CD4-positive, alpha-beta memory T cell (primary cell): ENCODE measurements at regions of chr13 and their contacts with region 1.

Region 1: GRCh38 chr13:33723772-33724435 is 94.0 kb upstream of the RFC3 start:
- DNase-seq: peak; percentile 63 to 74 (median 72)
- H3K4me3 ChIP-seq: no peak overlapping the region
- H3K4me3 Mint-ChIP-seq: peak overlapping the region in 6 of 8 donors; percentile 17 to 70 (median 54)
- H3K27ac ChIP-seq: no peak overlapping the region
- H3K27ac Mint-ChIP-seq: peak overlapping the region in 6 of 7 donors; percentile 49 to 81 (median 64)
- H3K4me1 ChIP-seq: peaks cover 23% of the 10 kb centered on the region
- H3K4me1 Mint-ChIP-seq: peaks cover 10 to 23% (median 20%) of the 10 kb centered on the region in 4 donors
- H3K27me3 ChIP-seq: no peaks in the 10 kb centered on the region
- H3K27me3 Mint-ChIP-seq: no peaks in the 10 kb centered on the region

Region 2: DNA sequence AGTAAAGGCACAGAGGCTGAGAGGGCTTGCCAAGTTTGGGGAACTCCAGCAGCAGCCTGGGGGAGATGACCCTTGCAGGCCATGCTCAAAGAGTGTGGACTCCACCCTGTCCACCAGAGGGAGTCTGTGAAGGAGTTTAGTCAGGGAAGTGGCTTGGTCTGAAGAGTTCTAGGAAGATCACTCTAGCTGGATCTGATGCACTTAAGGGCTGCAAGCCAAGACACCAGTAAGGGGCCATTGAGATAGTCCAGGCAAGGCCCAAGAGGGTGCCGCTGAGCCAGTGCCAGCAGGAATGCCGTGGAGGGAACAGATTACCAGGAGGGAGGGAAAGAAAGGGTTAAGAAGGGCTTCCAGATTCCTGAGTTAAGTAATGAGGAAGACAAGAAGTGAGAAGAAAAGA is 1477.4 kb before region 1 on chr13:
- CTCF ChIA-PET with region 1: no interaction called
- POLR2A ChIA-PET with region 1: no interaction called
- intact Hi-C with region 1: loop called (anchors 5 kb)
- DNase-seq: peak in 3 of 5 donors; percentile 1 to 9 (median 3)
- H3K4me3 ChIP-seq: no peak overlapping the region
- H3K4me3 Mint-ChIP-seq: no peak overlapping the region
- H3K27ac ChIP-seq: no peak overlapping the region
- H3K27ac Mint-ChIP-seq: peak overlapping the region in 1 of 7 donors; percentile 58
- H3K4me1 ChIP-seq: no peaks in the 10 kb centered on the region
- H3K4me1 Mint-ChIP-seq: no peaks in the 10 kb centered on the region
- H3K27me3 ChIP-seq: no peaks in the 10 kb centered on the region
- H3K27me3 Mint-ChIP-seq: no peaks in the 10 kb centered on the region

Region 3: GRCh38 chr13:32650705-32651311 is 1073.1 kb before region 1 on chr13:
- CTCF ChIA-PET with region 1: no interaction called
- POLR2A ChIA-PET with region 1: no interaction called
- intact Hi-C with region 1: loop called (anchors 5 kb)
- DNase-seq: peak; percentile 42 to 56 (median 52)
- H3K4me3 ChIP-seq: no peak overlapping the region
- H3K4me3 Mint-ChIP-seq: no peak overlapping the region
- H3K27ac ChIP-seq: no peak overlapping the region
- H3K27ac Mint-ChIP-seq: peak overlapping the region in 2 of 7 donors; percentile 28 to 44
- H3K4me1 ChIP-seq: peaks cover 23% of the 10 kb centered on the region
- H3K4me1 Mint-ChIP-seq: peaks cover 24 to 52% (median 40%) of the 10 kb centered on the region in 4 donors
- H3K27me3 ChIP-seq: no peaks in the 10 kb centered on the region
- H3K27me3 Mint-ChIP-seq: no peaks in the 10 kb centered on the region

Region 4: GRCh38 chr13:33228648-33229445 is 495.1 kb before region 1 on chr13:
- CTCF ChIA-PET with region 1: interaction called, 187 read pairs
- POLR2A ChIA-PET with region 1: interaction called, 6 read pairs
- intact Hi-C with region 1: loop called (anchors 1 kb)
- DNase-seq: peak in 4 of 5 donors; percentile 38 to 48 (median 42)
- H3K4me3 ChIP-seq: no peak overlapping the region
- H3K4me3 Mint-ChIP-seq: peak overlapping the region in 1 of 8 donors; percentile 26
- H3K27ac ChIP-seq: no peak overlapping the region
- H3K27ac Mint-ChIP-seq: peak overlapping the region in 1 of 7 donors; percentile 7
- H3K4me1 ChIP-seq: peaks cover 3% of the 10 kb centered on the region
- H3K4me1 Mint-ChIP-seq: peaks cover 0 to 5% (median 1%) of the 10 kb centered on the region in 4 donors
- H3K27me3 ChIP-seq: no peaks in the 10 kb centered on the region
- H3K27me3 Mint-ChIP-seq: peaks cover 0 to 4% of the 10 kb centered on the region in 2 donors

Region 5: DNA sequence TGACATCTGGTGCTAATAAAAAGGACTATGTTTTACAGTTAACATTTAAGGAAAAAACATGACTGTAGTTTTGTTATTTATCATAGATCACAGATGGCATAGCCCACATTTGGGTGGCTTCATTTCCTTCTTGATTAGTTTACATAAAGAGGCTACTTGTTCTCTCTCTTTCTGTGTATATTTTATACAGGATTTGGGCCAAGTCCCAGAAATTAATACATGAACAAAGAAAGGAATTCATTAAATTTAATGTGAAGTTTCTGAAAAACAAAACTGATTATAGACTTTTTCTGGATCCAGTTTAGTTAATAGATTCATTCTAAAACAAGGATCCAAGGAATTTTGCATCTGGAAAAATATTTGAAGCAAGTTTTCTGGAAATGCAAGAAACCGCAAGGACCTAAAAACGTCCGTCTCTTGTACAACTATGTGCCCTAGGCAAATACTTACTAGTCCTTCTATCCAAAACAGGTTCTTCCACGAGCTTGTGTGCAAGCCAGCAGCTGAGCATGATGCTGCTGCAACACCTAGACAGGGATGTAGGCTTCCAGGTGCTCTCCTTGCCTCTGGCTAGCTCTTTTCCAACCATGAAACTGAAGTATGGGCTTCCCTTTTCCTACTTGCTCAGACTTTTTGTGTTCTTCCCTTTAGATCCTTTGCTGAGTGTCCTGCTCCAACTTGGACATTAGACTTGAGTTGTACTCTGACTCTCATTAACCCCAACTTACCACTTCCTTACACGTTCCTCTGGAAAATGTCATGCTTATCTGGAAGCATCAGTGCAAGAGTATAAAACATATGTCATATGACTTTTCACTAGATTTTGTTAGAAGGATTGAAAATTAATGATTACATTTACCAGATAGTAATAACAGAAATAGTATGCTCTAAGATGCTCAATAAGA is 276.8 kb before region 1 on chr13:
- CTCF ChIA-PET with region 1: no interaction called
- POLR2A ChIA-PET with region 1: no interaction called
- intact Hi-C with region 1: no loop called
- DNase-seq: no peak
- H3K4me3 ChIP-seq: no peak overlapping the region
- H3K4me3 Mint-ChIP-seq: no peak overlapping the region
- H3K27ac ChIP-seq: no peak overlapping the region
- H3K27ac Mint-ChIP-seq: no peak overlapping the region
- H3K4me1 ChIP-seq: no peaks in the 10 kb centered on the region
- H3K4me1 Mint-ChIP-seq: no peaks in the 10 kb centered on the region
- H3K27me3 ChIP-seq: no peaks in the 10 kb centered on the region
- H3K27me3 Mint-ChIP-seq: peaks cover 0 to 2% of the 10 kb centered on the region in 2 donors

Region 6: DNA sequence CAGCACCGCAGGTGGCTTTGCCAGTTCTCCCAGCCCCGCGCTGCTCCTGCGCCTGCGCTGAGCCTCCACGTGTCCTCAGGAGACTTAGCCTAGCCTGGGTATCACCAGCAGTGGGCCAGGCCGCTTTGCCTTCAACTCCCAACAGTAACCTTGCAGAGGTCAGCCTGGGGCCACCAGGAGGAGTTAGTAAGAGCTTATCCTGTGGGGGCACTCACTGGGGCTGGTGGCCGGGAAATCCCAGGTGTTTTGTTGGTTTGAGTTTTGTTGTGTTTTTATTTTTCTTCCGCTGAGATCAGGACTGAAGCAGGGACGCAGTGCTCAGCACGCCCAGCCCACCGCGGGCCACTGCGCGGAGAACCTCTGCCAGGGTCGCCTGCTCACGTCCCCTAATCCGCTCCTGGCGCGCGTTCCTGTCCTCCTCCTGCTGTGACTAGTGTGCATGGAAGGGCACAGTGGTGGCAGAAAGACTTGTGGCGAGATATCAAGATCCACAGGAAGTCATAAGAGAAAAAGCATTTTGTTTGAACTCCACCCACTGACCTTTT is 113.4 kb before region 1 on chr13:
- CTCF ChIA-PET with region 1: interaction called, 3 read pairs
- POLR2A ChIA-PET with region 1: no interaction called
- intact Hi-C with region 1: loop called (anchors 1 kb)
- DNase-seq: peak; percentile 54 to 74 (median 62)
- H3K4me3 ChIP-seq: peak overlapping the region in 1 of 2 donors; percentile 46
- H3K4me3 Mint-ChIP-seq: peak overlapping the region; percentile 85 to 94 (median 89)
- H3K27ac ChIP-seq: peak overlapping the region; percentile 36
- H3K27ac Mint-ChIP-seq: peak overlapping the region; percentile 80 to 96 (median 94)
- H3K4me1 ChIP-seq: peaks cover 33% of the 10 kb centered on the region
- H3K4me1 Mint-ChIP-seq: peaks cover 20 to 35% (median 31%) of the 10 kb centered on the region in 4 donors
- H3K27me3 ChIP-seq: no peaks in the 10 kb centered on the region
- H3K27me3 Mint-ChIP-seq: no peaks in the 10 kb centered on the region

Region 7: DNA sequence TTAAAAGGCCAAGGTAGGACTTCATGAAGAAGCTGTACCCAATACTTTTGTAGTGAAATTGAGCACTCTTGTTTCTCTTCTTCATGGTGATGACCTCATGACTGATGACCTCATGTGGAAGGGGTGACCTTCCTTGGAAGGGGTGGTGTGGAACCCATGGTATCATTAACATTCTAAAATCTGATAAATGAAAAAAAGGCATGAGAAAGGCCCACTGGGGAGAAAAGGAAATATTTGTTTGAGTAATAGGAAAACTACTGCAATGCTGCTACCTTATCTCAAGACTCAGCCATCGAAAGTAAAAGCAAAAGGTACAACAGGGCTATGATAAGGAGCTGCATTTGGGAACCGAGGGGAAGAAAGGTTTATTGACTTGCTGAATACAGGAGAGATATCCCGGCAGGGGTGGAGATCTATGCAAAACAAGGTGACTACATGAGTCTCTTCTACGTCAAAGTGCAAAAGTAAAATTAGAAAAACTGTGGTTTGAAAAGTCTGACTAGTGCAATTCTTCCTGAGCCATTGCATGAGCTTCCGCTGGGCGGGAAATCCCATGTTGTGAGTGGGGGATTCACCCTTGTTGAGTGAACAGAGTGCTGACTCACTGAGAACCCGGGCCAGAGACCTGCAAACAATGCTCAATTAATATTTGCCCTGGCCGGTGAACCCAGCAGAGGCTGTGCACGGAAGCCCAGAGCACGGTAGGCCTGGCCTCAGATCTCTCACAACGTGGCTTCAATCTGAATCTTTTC is 44.8 kb before region 1 on chr13:
- CTCF ChIA-PET with region 1: interaction called, 17 read pairs
- POLR2A ChIA-PET with region 1: no interaction called
- intact Hi-C with region 1: no loop called
- DNase-seq: peak; percentile 34 to 87 (median 44)
- H3K4me3 ChIP-seq: peak overlapping the region; percentile 19 to 36
- H3K4me3 Mint-ChIP-seq: peak overlapping the region; percentile 75 to 81 (median 77)
- H3K27ac ChIP-seq: peak overlapping the region; percentile 39
- H3K27ac Mint-ChIP-seq: peak overlapping the region; percentile 68 to 90 (median 84)
- H3K4me1 ChIP-seq: peaks cover 17% of the 10 kb centered on the region
- H3K4me1 Mint-ChIP-seq: peaks cover 15 to 40% (median 25%) of the 10 kb centered on the region in 4 donors
- H3K27me3 ChIP-seq: no peaks in the 10 kb centered on the region
- H3K27me3 Mint-ChIP-seq: no peaks in the 10 kb centered on the region

Region 8: GRCh38 chr13:33707449-33707848 is 16.5 kb before region 1 on chr13:
- CTCF ChIA-PET with region 1: interaction called, 10 read pairs
- POLR2A ChIA-PET with region 1: no interaction called
- intact Hi-C with region 1: no loop called
- DNase-seq: no peak
- H3K4me3 ChIP-seq: no peak overlapping the region
- H3K4me3 Mint-ChIP-seq: no peak overlapping the region
- H3K27ac ChIP-seq: no peak overlapping the region
- H3K27ac Mint-ChIP-seq: no peak overlapping the region
- H3K4me1 ChIP-seq: no peaks in the 10 kb centered on the region
- H3K4me1 Mint-ChIP-seq: no peaks in the 10 kb centered on the region
- H3K27me3 ChIP-seq: no peaks in the 10 kb centered on the region
- H3K27me3 Mint-ChIP-seq: no peaks in the 10 kb centered on the region